MCF 10A (cell line): ENCODE measurements at regions of chr17 and their contacts with region 1.

Region 1: DNA sequence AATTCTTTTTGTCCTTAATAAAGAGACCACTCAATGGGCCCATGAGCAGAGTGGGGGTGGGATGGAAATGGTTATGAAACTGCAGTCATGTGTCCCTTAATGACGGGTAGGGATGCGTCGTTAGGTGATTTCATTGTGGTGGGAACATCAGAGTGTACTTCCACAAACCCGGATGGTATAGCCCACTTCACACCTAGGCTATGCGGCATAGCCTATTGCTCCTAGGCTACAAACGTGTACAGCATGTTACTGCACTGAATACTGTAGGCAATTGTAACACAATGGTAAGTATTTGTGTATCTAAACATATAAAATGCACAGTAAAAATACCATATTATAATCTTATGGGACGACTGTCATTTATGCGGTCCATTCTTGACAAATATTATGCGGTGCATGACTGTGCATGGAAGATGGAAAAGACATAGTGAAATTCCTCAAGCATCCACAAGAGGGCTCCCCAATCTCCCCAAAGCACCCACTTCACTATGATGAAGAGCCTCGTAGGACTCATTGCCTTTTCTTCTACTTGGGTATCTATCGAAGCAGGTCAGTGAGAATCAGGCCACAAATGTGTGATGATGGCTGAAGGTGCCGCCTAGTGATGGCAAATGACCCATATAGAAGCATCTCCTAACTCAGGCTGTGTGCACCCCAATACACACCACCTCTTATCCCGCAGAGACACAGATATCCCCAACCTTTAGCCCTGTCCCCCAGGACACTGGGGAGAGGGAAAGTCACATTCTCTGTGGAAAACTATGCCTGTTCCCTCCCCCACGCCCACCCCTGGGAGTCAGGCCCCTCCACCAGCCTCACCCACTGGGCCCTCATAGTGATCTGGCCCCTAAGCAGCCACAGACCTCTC is 43.5 kb downstream of the TBX21 start:
- DNase-seq: peak; percentile 56
- H3K4me3 Mint-ChIP-seq: no peak overlapping the region
- H3K27ac Mint-ChIP-seq: no peak overlapping the region
- H3K4me1 Mint-ChIP-seq: no peaks in the 10 kb centered on the region
- H3K27me3 Mint-ChIP-seq: peaks cover 52% of the 10 kb centered on the region
- CTCF ChIP-seq: peak; percentile 68

Region 2: DNA sequence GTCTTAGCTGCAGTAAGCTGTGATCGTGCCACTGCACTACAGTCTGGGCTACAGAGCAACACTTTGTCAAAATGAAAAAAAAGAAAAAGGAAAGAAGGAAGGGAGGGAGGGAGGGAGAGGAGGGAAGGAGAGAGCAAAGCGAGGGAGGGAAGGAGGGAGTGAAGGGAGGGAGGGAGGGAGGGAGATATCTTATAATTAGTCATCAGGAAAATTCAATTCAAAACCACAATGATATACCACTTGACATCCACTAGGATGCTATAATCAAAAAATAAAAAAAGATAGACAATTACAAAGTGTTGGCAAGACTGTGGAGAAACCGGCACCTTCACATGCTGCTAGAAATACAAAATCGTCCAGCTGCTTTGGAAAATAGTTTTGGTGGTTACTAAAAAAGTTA is 681.3 kb before region 1 on chr17:
- CTCF ChIA-PET with region 1: no interaction called
- POLR2A ChIA-PET with region 1: no interaction called
- intact Hi-C with region 1: no loop called
- DNase-seq: no peak
- H3K4me3 Mint-ChIP-seq: no peak overlapping the region
- H3K27ac Mint-ChIP-seq: no peak overlapping the region
- H3K4me1 Mint-ChIP-seq: peaks cover 12% of the 10 kb centered on the region
- H3K27me3 Mint-ChIP-seq: no peaks in the 10 kb centered on the region
- CTCF ChIP-seq: no peak

Region 3: DNA sequence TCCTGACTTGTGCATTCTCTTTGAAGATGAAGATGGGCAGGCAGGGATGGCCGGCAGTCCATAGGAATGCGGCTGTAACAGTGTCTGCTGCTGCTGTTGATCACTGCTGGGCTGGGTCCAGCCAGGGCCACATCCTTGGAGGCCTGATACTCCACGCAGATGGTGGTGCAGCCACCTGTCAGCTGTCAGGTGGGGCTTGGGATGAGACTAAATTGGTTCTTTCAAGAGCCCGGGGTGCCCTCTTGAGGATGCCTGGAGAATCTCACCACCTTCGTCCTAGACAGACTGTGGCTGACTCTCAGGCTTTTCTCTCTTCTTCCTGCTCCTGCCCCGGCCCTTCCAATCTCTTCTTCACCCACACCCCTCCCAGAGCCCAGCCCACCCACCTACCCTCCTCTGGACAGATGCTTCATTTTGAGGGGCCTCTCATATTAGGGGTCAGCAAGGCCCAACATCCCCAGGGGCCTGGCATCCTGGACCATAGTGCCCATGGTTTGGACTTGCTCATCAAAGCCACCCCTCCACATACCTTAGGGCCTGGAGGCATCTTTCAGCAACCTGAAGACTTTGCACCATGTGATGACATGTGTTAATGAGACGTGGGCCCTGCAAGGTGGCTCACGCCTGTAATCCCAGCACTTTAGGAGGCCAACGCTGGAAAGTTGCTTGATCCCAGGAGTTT is 25.9 kb after region 1 on chr17:
- CTCF ChIA-PET with region 1: interaction called, 7 read pairs
- POLR2A ChIA-PET with region 1: no interaction called
- intact Hi-C with region 1: loop called (anchors 1 kb)
- DNase-seq: peak; percentile 67
- H3K4me3 Mint-ChIP-seq: no peak overlapping the region
- H3K27ac Mint-ChIP-seq: no peak overlapping the region
- H3K4me1 Mint-ChIP-seq: no peaks in the 10 kb centered on the region
- H3K27me3 Mint-ChIP-seq: peaks cover 8% of the 10 kb centered on the region
- CTCF ChIP-seq: peak; percentile 70

Region 4: GRCh38 chr17:47831003-47831933 is 54.7 kb after region 1 on chr17 and contains the starts of genes LRRC46 and MRPL10:
- CTCF ChIA-PET with region 1: interaction called, 6 read pairs
- POLR2A ChIA-PET with region 1: interaction called, 3 read pairs
- intact Hi-C with region 1: loop called (anchors 1 kb)
- DNase-seq: peak; percentile 90
- H3K4me3 Mint-ChIP-seq: peak within 1 kb of the TSS; percentile 83
- H3K27ac Mint-ChIP-seq: peak within 1 kb of the TSS; percentile 47
- H3K4me1 Mint-ChIP-seq: peaks cover 10% of the 10 kb centered on the region
- H3K27me3 Mint-ChIP-seq: no peaks in the 10 kb centered on the region
- CTCF ChIP-seq: peak; percentile 40
- total RNA-seq, gene LRRC46: 1.2 and 1.4 TPM in 2 replicates
- total RNA-seq, gene MRPL10: 43.2 and 49.3 TPM in 2 replicates

Region 5: DNA sequence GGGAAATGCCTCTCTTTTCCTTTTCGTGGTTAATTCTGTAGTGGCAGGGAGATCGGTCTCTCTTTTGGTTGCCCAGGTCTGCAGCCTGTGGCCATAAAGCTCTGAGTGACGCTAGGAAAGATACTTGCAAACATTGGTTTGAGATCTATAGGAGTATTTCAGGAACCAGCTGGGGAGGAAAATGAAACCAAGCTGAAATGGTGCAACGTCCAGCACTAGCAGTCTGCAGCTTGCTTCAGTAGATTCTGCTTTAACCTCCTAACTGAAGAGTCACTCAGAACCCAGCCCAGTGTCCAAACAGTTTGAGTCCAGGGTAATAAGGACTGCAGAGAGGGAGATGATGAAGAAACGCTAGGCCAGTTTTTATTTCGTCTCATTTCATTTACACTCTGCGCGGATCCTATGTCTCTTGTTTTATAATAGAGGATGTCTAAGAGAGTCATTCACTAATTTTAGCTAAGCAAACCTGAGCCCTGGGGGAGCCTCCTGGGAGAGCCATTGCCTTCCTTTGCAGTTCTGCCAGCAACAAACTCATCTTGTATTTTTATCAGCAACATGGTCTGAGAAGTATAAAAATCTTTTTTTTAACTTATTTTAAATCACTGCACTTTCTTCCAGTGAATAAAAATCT is 131.5 kb after region 1 on chr17:
- CTCF ChIA-PET with region 1: no interaction called
- POLR2A ChIA-PET with region 1: no interaction called
- intact Hi-C with region 1: no loop called
- DNase-seq: no peak
- H3K4me3 Mint-ChIP-seq: no peak overlapping the region
- H3K27ac Mint-ChIP-seq: no peak overlapping the region
- H3K4me1 Mint-ChIP-seq: peaks cover 20% of the 10 kb centered on the region
- H3K27me3 Mint-ChIP-seq: no peaks in the 10 kb centered on the region
- CTCF ChIP-seq: no peak